Esophagus muscularis mucosa (tissue), 4 donors: ENCODE measurements at regions of chr1 and their contacts with region 1.

Region 1: DNA sequence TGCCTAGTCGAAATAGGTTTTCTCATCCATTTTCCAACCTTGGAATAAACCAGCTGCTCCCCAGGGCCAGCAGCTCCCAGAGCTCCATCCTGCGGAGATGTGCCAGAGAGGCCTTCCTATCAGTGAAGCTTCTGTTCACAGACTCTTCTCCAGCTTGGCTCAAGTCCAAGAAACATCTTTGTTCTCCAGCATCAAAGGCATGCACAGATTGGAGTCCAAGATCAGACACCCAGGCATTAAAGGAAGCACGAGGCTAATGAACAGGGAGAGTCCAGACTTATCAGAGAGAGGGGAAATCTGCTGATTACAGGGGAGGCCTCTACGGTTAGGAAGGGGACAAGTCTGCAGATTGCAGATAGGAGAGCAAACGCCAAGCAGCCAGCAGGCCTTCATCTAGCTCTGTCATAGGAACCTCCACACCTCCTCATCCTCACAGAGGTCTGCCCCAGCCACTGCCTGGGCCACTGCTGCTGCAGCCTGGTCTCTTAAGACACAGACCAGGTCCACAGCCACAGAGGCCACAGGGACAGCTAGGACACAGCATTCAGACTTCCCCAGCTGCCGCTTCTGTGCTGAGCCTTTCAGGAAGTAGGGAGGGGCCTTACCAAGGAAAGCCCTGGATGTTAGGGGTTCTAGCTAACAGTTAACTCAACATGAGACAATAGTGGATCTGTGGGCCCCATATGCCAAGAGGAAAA is 3.4 kb downstream of the PRR9 start:
- DNase-seq: no peak
- H3K4me3 ChIP-seq: no peak overlapping the region
- H3K27ac ChIP-seq: no peak overlapping the region
- H3K4me1 ChIP-seq: no peaks in the 10 kb centered on the region
- H3K27me3 ChIP-seq: peaks cover 0 to 8% (median 0%) of the 10 kb centered on the region in 4 donors
- CTCF ChIP-seq: no peak
- EP300 ChIP-seq: no peak
- POLR2A ChIP-seq: no peak

Region 2: DNA sequence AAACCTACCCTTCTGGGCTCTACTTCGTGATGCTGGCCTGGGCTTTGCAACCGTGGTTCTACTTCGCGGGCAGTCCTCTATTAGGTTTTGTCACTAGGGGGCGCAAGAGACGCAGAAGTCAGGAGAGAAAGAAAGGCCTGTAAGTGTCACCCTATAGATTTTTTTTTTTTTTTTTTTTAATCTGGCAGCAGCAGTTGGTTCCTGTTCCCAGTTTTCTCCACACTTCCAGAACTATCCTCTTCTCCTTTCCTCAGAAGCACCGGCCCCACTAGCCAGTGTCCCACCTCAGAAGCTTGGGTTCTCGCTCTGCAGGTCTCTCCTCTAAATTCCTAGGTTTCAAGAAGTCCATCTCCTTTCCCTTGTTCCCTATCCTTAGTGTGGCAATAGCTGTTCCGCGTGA is 566.6 kb before region 1 on chr1:
- intact Hi-C with region 1: loop called (anchors 5 kb)
- DNase-seq: no peak
- H3K4me3 ChIP-seq: no peak overlapping the region
- H3K27ac ChIP-seq: no peak overlapping the region
- H3K4me1 ChIP-seq: no peaks in the 10 kb centered on the region
- H3K27me3 ChIP-seq: no peaks in the 10 kb centered on the region
- CTCF ChIP-seq: peak; percentile 43 to 57 (median 46)
- EP300 ChIP-seq: no peak
- POLR2A ChIP-seq: no peak

Region 3: GRCh38 chr1:152880907-152881306 is 339.8 kb before region 1 on chr1:
- intact Hi-C with region 1: loop called (anchors 5 kb)
- DNase-seq: peak; percentile 39
- H3K4me3 ChIP-seq: no peak overlapping the region
- H3K27ac ChIP-seq: no peak overlapping the region
- H3K4me1 ChIP-seq: peaks cover 0 to 24% (median 22%) of the 10 kb centered on the region in 4 donors
- H3K27me3 ChIP-seq: no peaks in the 10 kb centered on the region
- CTCF ChIP-seq: no peak
- EP300 ChIP-seq: no peak
- POLR2A ChIP-seq: no peak